Prostate gland (tissue), 2 donors: ENCODE measurements at regions of chr15 and their contacts with region 1.

Region 1: GRCh38 chr15:71443538-71443937 is 328.3 kb downstream of the THSD4 start:
- DNase-seq: peak; percentile 55
- H3K4me3 ChIP-seq: no peak overlapping the region
- H3K27ac ChIP-seq: peak overlapping the region in 1 of 2 donors; percentile 25
- H3K4me1 ChIP-seq: no peaks in the 10 kb centered on the region
- H3K27me3 ChIP-seq: no peaks in the 10 kb centered on the region
- CTCF ChIP-seq: peak; percentile 85 to 87 (median 85)
- POLR2A ChIP-seq: no peak

Region 2: GRCh38 chr15:71011503-71012155 is 431.9 kb before region 1 on chr15:
- intact Hi-C with region 1: loop called (anchors 5 kb)
- DNase-seq: peak; percentile 46
- H3K4me3 ChIP-seq: no peak overlapping the region
- H3K27ac ChIP-seq: no peak overlapping the region
- H3K4me1 ChIP-seq: no peaks in the 10 kb centered on the region
- H3K27me3 ChIP-seq: no peaks in the 10 kb centered on the region
- CTCF ChIP-seq: peak; percentile 54 to 96 (median 86)
- POLR2A ChIP-seq: no peak

Region 3: GRCh38 chr15:71853543-71853942 is 410.0 kb after region 1 on chr15:
- intact Hi-C with region 1: no loop called
- DNase-seq: no peak
- H3K4me3 ChIP-seq: no peak overlapping the region
- H3K27ac ChIP-seq: no peak overlapping the region
- H3K4me1 ChIP-seq: no peaks in the 10 kb centered on the region
- H3K27me3 ChIP-seq: no peaks in the 10 kb centered on the region
- CTCF ChIP-seq: no peak
- POLR2A ChIP-seq: no peak

Region 4: DNA sequence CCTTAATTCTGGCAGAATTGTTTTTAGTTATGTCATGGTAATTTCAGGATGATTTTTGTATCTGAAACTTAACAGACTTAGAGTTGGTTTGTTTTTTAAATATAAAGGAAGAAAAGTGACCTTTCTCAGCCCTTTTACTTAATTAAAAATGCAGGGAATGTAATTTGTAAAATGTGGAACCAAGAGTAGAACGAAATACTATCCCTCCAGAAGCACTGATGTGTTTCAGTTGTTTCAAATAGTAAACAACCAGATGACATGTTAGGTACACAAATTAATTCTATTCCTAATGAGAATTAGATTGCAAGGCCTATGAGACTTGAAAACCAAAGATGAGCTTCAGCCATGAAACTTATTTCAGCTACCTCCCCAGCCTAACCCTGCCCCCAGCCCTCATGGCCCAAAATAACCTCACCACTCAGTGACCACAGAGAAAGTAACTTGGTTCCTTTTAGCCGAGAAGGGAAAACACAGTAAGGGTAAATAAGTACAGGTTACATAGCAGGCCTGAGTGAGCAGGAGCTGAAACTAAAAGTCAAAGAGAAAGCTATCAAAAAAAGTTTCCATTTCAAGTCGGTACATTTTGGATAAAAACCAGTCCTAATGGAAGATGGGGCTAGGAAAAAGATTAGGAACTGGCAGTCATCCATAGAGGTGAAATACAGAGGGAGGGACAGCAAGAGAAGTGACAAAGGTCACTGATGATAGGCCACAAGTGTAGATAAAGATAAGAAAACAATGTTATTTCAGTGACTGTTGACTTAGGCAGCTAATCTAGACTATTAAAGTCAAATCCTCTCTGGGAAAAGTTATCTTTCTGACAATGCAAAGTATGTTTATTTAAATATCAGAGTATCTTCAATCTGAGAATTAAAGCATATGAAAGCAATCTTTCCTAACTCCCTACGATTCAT is 697.9 kb after region 1 on chr15:
- intact Hi-C with region 1: no loop called
- DNase-seq: no peak
- H3K4me3 ChIP-seq: no peak overlapping the region
- H3K27ac ChIP-seq: no peak overlapping the region
- H3K4me1 ChIP-seq: no peaks in the 10 kb centered on the region
- H3K27me3 ChIP-seq: no peaks in the 10 kb centered on the region
- CTCF ChIP-seq: no peak
- POLR2A ChIP-seq: no peak